CD8-positive, alpha-beta T cell (primary cell): ENCODE measurements at regions of chr2 and their contacts with region 1.

Region 1: DNA sequence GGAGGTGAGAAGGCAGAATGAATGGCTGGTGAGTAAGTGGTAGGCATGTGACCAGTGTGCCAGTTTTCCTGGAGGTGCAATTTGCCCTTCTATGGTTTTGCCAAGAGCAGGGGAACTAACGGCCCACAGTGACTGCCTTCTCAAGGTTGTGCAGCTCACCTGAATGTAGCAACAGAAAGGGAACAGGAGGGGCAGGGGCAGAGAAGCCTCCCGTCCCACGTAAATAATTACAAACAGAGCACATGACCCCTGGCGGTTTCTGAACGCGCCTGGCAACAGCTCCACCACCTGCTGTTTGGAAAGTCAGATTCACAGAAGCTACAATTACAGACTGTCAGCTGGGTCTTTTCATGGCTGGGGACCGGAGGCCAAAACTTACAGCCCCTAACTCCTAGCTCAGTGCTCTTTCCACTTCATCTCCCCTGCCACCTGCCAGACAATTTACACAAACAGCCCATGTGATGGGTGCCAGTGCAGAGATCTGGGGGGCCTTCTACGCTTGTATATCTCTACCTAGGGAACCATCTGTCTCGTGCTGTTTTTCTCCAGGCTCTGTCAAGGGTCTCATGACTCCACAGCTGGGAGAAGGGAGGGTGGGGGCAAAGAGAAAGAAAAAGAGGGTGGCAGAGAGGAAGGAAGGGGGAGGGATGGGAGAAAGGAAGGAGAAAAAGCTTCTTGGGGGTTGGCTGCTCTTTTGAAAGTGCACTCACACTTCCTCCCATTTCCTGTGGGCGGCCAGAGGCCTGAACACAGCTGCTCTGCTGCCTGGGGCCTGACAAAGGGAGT is 69.6 kb downstream of the POLR1A start:
- DNase-seq: peak; percentile 42 to 91 (median 72)
- ATAC-seq: peak; percentile 50
- H3K4me3 ChIP-seq: peak overlapping the region; percentile 4 to 41
- H3K4me3 Mint-ChIP-seq: peak overlapping the region; percentile 79
- H3K27ac ChIP-seq: peak overlapping the region; percentile 87 to 93
- H3K27ac Mint-ChIP-seq: peak overlapping the region; percentile 100
- H3K4me1 ChIP-seq: peaks cover 83% of the 10 kb centered on the region
- H3K4me1 Mint-ChIP-seq: peaks cover 86% of the 10 kb centered on the region
- H3K27me3 ChIP-seq: no peaks in the 10 kb centered on the region
- H3K27me3 Mint-ChIP-seq: no peaks in the 10 kb centered on the region
- CTCF ChIP-seq: peak; percentile 27

Region 2: GRCh38 chr2:85852937-85853498 is 183.1 kb before region 1 on chr2:
- CTCF ChIA-PET with region 1: no interaction called
- POLR2A ChIA-PET with region 1: interaction called, 9 read pairs
- intact Hi-C with region 1: loop called (anchors 1 to 2 kb)
- DNase-seq: peak; percentile 59 to 93 (median 81)
- ATAC-seq: peak; percentile 89
- H3K4me3 ChIP-seq: peak overlapping the region; percentile 48 to 49
- H3K4me3 Mint-ChIP-seq: peak overlapping the region; percentile 85
- H3K27ac ChIP-seq: peak overlapping the region; percentile 87 to 97
- H3K27ac Mint-ChIP-seq: peak overlapping the region; percentile 99
- H3K4me1 ChIP-seq: peaks cover 63% of the 10 kb centered on the region
- H3K4me1 Mint-ChIP-seq: peaks cover 73% of the 10 kb centered on the region
- H3K27me3 ChIP-seq: no peaks in the 10 kb centered on the region
- H3K27me3 Mint-ChIP-seq: no peaks in the 10 kb centered on the region
- CTCF ChIP-seq: no peak

Region 3: DNA sequence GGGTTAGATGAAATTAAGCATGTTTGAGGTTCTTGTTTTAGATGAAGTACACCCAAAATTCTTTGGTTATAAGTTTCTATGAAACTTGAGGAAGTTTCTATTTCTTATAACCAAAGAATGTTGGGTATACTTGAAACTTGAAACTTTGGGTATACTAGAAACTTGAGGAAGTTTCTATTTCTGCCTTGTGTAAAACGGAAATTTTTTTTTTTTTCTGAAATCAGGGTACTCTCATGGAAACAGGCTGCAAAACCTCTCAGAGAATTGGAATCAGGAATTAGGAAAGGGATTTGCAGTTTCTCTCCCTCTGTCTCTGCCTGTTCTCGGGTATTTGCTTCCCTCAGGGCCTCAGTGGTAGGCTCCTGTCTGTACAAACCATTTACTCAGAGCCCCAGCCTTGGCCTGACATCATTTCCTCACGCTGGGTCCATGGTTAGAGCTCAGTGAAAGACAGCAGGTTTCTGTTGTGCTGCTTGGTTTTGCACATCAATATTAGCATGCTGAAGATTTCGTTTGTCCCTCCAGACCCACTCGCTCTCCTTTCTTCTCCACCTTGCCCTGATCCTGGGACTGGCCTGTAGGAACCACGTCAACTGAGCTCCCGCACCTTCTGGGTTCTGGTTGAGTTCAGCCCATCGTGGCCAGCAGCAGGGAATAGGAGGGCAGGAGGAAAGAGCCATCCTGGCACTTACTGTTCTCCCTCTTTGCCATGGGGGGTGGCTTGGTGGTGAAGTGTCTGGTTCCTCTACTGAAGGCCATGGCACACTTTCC is 36.8 kb before region 1 on chr2:
- CTCF ChIA-PET with region 1: no interaction called
- POLR2A ChIA-PET with region 1: interaction called, 3 read pairs
- intact Hi-C with region 1: loop called in 1 of 2 experiments (anchors 5 kb)
- DNase-seq: peak in 8 of 9 experiments; percentile 9 to 69 (median 48)
- ATAC-seq: peak; percentile 91
- H3K4me3 ChIP-seq: no peak overlapping the region
- H3K4me3 Mint-ChIP-seq: peak overlapping the region; percentile 58
- H3K27ac ChIP-seq: peak overlapping the region; percentile 43 to 73
- H3K27ac Mint-ChIP-seq: peak overlapping the region; percentile 93
- H3K4me1 ChIP-seq: peaks cover 64% of the 10 kb centered on the region
- H3K4me1 Mint-ChIP-seq: peaks cover 47% of the 10 kb centered on the region
- H3K27me3 ChIP-seq: no peaks in the 10 kb centered on the region
- H3K27me3 Mint-ChIP-seq: no peaks in the 10 kb centered on the region
- CTCF ChIP-seq: no peak

Region 4: GRCh38 chr2:86079981-86080911 is 44.2 kb after region 1 on chr2:
- CTCF ChIA-PET with region 1: interaction called, 42 read pairs
- POLR2A ChIA-PET with region 1: interaction called, 19 read pairs
- intact Hi-C with region 1: loop called (anchors 2 kb)
- DNase-seq: peak; percentile 73 to 92 (median 86)
- ATAC-seq: peak; percentile 76
- H3K4me3 ChIP-seq: peak overlapping the region in 1 of 2 experiments; percentile 9
- H3K4me3 Mint-ChIP-seq: peak overlapping the region; percentile 23
- H3K27ac ChIP-seq: peak overlapping the region; percentile 50 to 89
- H3K27ac Mint-ChIP-seq: peak overlapping the region; percentile 92
- H3K4me1 ChIP-seq: peaks cover 21% of the 10 kb centered on the region
- H3K4me1 Mint-ChIP-seq: peaks cover 27% of the 10 kb centered on the region
- H3K27me3 ChIP-seq: no peaks in the 10 kb centered on the region
- H3K27me3 Mint-ChIP-seq: no peaks in the 10 kb centered on the region
- CTCF ChIP-seq: peak; percentile 69

Region 5: GRCh38 chr2:86195055-86195807 is 159.2 kb after region 1 on chr2 and contains the start of gene IMMT:
- CTCF ChIA-PET with region 1: no interaction called
- POLR2A ChIA-PET with region 1: no interaction called
- intact Hi-C with region 1: loop called (anchors 5 kb)
- DNase-seq: peak; percentile 79 to 97 (median 93)
- ATAC-seq: peak; percentile 90
- H3K4me3 ChIP-seq: peak within 1 kb of the TSS; percentile 96 to 98
- H3K4me3 Mint-ChIP-seq: peak within 1 kb of the TSS; percentile 89
- H3K27ac ChIP-seq: peak within 1 kb of the TSS; percentile 91 to 98
- H3K27ac Mint-ChIP-seq: peak within 1 kb of the TSS; percentile 90
- H3K4me1 ChIP-seq: peaks cover 37% of the 10 kb centered on the region
- H3K4me1 Mint-ChIP-seq: peaks cover 63% of the 10 kb centered on the region
- H3K27me3 ChIP-seq: no peaks in the 10 kb centered on the region
- H3K27me3 Mint-ChIP-seq: no peaks in the 10 kb centered on the region
- CTCF ChIP-seq: no peak
- total RNA-seq, gene IMMT: 34.3 to 35.8 TPM